BJ (cell line): ENCODE measurements at regions of chr20 and their contacts with region 1.

Region 1: GRCh38 chr20:46013826-46014516 is 5.3 kb downstream of the MMP9 start:
- DNase-seq: no peak
- H3K4me3 ChIP-seq: no peak overlapping the region
- H3K27me3 ChIP-seq: peaks cover 47% of the 10 kb centered on the region
- CTCF ChIP-seq: peak; percentile 71

Region 2: GRCh38 chr20:45910670-45911485 is 103.1 kb before region 1 on chr20:
- CTCF ChIA-PET with region 1: no interaction called
- POLR2A ChIA-PET with region 1: no interaction called
- DNase-seq: peak; percentile 99
- H3K4me3 ChIP-seq: peak overlapping the region; percentile 25
- H3K27me3 ChIP-seq: no peaks in the 10 kb centered on the region
- CTCF ChIP-seq: no peak

Region 3: GRCh38 chr20:45998761-45999160 is 15.2 kb before region 1 on chr20:
- CTCF ChIA-PET with region 1: interaction called, 30 read pairs
- POLR2A ChIA-PET with region 1: no interaction called
- DNase-seq: no peak
- H3K4me3 ChIP-seq: no peak overlapping the region
- H3K27me3 ChIP-seq: peaks cover 25% of the 10 kb centered on the region
- CTCF ChIP-seq: no peak

Region 4: GRCh38 chr20:46089417-46090388 is 75.7 kb after region 1 on chr20 and contains the start of gene NCOA5:
- CTCF ChIA-PET with region 1: interaction called, 12 read pairs
- POLR2A ChIA-PET with region 1: no interaction called
- DNase-seq: peak; percentile 73
- H3K4me3 ChIP-seq: peak within 1 kb of the TSS; percentile 79
- H3K27me3 ChIP-seq: no peaks in the 10 kb centered on the region
- CTCF ChIP-seq: 0 out of 2 replicates have a peak, but pooled peaks have one; percentile 15
- polyA plus RNA-seq, gene NCOA5: 19.0 and 19.9 TPM in 2 replicates

Region 5: GRCh38 chr20:46174469-46175128 is 160.6 kb after region 1 on chr20:
- CTCF ChIA-PET with region 1: interaction called, 11 read pairs
- POLR2A ChIA-PET with region 1: no interaction called
- DNase-seq: no peak
- H3K4me3 ChIP-seq: no peak overlapping the region
- H3K27me3 ChIP-seq: peaks cover 18% of the 10 kb centered on the region
- CTCF ChIP-seq: peak; percentile 65